Activated naive CD4-positive, alpha-beta T cell treated with anti-CD3 and anti-CD28 coated beads for 36 hours (primary cell): ENCODE measurements at regions of chr7 and their contacts with region 1.

Region 1: DNA sequence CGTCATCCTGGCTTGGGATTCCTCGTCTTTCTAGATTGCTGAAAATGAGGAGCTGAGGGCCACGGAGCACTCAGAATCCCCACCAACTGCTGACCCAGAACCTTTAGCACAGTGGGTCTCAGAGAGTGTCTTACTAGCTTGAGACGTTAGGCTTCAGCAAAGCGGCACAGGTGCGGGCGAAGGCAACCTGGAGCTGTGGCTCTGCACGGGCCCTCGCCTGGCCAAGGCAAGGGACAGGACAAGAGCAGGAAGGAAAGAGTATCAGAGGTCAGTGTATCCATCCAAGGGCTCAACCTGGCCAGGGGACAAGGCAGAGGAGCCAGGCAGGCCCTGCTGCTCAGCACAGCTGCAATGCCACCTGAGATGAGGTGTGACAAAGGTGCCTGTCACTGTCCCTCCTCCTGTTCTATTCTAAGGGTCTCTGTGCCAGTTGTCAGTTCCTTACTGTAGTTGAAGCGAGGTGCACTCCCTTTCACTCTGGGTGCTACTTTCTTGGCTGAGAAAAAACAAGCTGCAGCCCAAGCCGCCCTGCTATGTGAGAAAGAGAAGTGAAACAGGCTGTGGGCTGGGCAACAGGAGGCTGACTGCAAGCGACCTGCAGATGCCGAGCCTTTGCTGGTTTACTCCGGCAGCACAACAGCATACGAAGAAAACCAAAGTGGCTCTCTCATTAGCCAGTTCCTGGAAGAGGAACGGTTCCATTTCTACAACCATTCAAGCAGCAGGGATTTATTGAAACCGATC is 33.3 kb upstream of the KDM7A start:
- DNase-seq: peak; percentile 87
- H3K4me3 Mint-ChIP-seq: peak overlapping the region; percentile 51
- H3K27ac Mint-ChIP-seq: peak overlapping the region; percentile 90
- H3K4me1 Mint-ChIP-seq: peaks cover 86% of the 10 kb centered on the region
- H3K27me3 Mint-ChIP-seq: no peaks in the 10 kb centered on the region

Region 2: GRCh38 chr7:139767561-139767982 is 442.5 kb before region 1 on chr7:
- CTCF ChIA-PET with region 1: interaction called, 3 read pairs
- intact Hi-C with region 1: loop called (anchors 5 kb)
- DNase-seq: peak; percentile 38
- H3K4me3 Mint-ChIP-seq: no peak overlapping the region
- H3K27ac Mint-ChIP-seq: peak overlapping the region; percentile 73
- H3K4me1 Mint-ChIP-seq: peaks cover 76% of the 10 kb centered on the region
- H3K27me3 Mint-ChIP-seq: no peaks in the 10 kb centered on the region

Region 3: GRCh38 chr7:139915864-139916716 is 293.9 kb before region 1 on chr7:
- CTCF ChIA-PET with region 1: no interaction called
- intact Hi-C with region 1: loop called (anchors 5 kb)
- DNase-seq: peak; percentile 87
- H3K4me3 Mint-ChIP-seq: no peak overlapping the region
- H3K27ac Mint-ChIP-seq: peak overlapping the region; percentile 19
- H3K4me1 Mint-ChIP-seq: peaks cover 24% of the 10 kb centered on the region
- H3K27me3 Mint-ChIP-seq: peaks cover 2% of the 10 kb centered on the region

Region 4: DNA sequence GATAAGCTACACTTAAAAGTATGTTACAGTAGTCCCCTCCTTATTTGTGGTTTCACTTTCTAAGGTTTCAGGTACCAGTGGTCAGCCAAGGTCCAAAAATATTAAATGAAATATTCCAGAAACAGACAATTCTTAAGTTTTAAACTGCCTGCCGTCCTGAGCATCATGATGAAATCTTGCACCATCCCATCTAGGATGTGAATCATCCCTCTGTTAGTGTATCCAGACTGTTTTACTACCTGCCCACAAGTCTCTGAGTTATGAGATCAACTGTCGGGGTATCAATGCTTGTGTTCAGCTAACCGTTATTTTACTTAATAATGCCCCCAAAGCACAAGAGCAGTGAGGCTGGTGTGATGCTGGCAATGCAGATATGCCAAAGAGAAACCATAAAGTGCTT is 44.6 kb before region 1 on chr7:
- CTCF ChIA-PET with region 1: no interaction called
- intact Hi-C with region 1: loop called (anchors 1 kb)
- DNase-seq: peak; percentile 42
- H3K4me3 Mint-ChIP-seq: peak overlapping the region; percentile 39
- H3K27ac Mint-ChIP-seq: peak overlapping the region; percentile 95
- H3K4me1 Mint-ChIP-seq: peaks cover 79% of the 10 kb centered on the region
- H3K27me3 Mint-ChIP-seq: no peaks in the 10 kb centered on the region

Region 5: GRCh38 chr7:140196361-140197217 is 13.4 kb before region 1 on chr7:
- CTCF ChIA-PET with region 1: interaction called, 4 read pairs
- intact Hi-C with region 1: loop called (anchors 1 kb)
- DNase-seq: no peak
- H3K4me3 Mint-ChIP-seq: no peak overlapping the region
- H3K27ac Mint-ChIP-seq: peak overlapping the region; percentile 86
- H3K4me1 Mint-ChIP-seq: peaks cover 35% of the 10 kb centered on the region
- H3K27me3 Mint-ChIP-seq: no peaks in the 10 kb centered on the region

Region 6: DNA sequence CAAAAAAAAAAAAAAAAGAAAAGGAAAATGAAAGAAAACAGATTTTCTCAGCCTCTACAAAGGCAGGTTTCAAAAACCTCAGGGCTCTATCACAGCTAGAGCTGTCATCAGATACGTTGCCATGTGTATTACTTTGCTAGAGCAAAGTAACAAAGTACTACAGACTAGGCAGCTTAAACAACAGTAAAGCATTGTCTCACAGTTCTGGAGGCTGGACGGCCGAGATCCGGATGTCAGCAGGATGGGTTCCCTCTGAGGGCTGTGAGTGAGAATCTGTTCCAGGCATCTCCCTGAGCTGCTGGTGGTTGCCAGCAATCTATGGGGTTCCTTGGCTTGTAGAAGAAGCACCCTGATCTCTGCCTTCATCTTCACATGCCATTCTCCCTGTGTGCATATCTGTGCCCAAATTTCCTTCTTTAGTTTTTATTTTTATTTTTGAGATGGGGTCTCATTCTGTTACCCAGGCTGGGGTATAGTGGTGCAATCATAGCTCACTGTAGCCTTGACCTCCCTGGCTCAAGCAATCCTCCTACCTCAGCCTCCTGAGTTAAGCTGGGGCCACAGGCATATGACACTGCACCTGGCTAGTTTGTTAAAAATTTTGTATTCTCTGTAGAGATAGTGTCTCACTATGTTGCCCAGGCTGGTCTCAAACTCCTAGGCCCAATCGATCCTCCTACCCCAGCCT is 15.7 kb after region 1 on chr7:
- CTCF ChIA-PET with region 1: interaction called, 6 read pairs
- intact Hi-C with region 1: loop called (anchors 1 kb)
- DNase-seq: peak; percentile 53
- H3K4me3 Mint-ChIP-seq: peak overlapping the region; percentile 52
- H3K27ac Mint-ChIP-seq: peak overlapping the region; percentile 82
- H3K4me1 Mint-ChIP-seq: peaks cover 48% of the 10 kb centered on the region
- H3K27me3 Mint-ChIP-seq: no peaks in the 10 kb centered on the region

Region 7: DNA sequence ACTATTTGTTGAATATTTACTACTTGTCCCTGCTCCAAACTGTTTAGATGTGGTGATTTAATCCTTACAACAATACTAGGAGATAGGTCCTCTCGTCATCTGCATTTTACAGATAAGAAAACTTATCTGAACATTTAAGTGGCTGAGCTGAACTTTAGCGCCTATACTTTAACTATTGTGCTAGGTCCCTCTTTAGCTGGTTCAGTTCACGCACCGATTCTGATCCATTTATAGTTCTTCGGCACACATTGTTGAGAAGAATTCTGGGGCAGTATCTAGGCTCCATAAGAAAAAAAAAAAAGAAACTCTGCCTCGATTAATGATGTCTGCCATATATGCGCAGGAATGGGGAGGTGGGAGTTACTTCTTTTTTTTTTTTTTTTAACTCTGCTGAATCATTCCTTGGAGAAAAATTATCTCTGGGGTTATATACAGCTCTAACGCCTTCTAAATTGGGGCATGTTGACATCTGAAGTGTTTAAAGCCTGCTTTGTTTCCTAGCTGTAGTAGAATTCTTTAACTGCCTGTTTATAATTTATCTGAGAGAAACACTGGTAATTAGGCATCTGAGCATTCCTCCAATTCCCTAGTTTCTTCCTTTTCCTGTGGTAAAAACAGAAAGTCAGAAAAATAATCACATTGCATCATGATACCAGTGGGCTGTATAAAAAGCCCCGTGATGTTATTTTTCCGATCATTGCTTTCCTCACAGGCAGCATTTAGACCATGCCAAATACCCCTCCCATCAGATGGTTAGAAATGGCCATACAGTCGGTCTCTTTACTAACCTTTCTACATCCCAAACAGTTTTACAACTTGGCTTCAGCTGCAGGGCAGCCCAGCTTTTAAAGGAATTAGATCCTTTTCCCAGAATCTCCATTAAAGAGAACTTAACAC is 65.3 kb after region 1 on chr7:
- CTCF ChIA-PET with region 1: no interaction called
- intact Hi-C with region 1: no loop called
- DNase-seq: no peak
- H3K4me3 Mint-ChIP-seq: no peak overlapping the region
- H3K27ac Mint-ChIP-seq: no peak overlapping the region
- H3K4me1 Mint-ChIP-seq: no peaks in the 10 kb centered on the region
- H3K27me3 Mint-ChIP-seq: no peaks in the 10 kb centered on the region

Region 8: DNA sequence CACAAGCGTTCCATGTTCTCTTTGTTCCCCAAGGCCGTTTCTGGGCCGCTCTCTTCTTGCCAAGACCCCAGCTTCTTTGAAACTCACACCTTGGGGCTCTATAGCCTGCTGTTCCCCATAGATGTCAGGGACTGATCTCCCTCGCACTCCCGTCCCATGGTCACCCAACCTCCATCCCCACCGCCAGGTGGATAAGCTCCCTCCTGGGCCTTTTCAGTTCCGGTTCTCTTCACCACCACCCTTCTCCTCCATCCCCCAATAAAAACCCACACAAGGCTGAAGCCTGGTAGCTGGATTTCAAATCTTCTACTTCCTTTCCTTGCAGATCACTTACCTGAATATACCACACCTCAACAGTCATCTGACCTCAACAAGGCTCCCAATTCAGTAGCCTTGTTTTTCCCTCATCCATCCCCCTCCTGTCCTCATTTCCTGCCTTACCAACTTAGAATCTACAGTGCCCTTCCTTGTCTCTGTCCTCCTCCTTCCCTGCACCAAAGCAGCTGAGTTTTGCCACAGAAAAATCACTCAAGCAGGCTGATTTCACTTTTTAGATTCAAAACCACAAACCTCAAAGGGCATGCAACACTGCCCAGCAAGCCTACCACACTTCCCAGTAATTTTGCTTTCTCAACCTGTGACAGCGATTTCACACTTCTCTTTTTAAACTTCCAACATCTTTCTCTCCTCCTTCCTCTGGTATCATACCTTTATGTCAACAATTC is 180.6 kb after region 1 on chr7:
- CTCF ChIA-PET with region 1: no interaction called
- intact Hi-C with region 1: loop called (anchors 5 kb)
- DNase-seq: peak; percentile 55
- H3K4me3 Mint-ChIP-seq: no peak overlapping the region
- H3K27ac Mint-ChIP-seq: no peak overlapping the region
- H3K4me1 Mint-ChIP-seq: peaks cover 1% of the 10 kb centered on the region
- H3K27me3 Mint-ChIP-seq: no peaks in the 10 kb centered on the region